PC-9 (cell line): ENCODE measurements at regions of chr6 and their contacts with region 1.

Region 1: DNA sequence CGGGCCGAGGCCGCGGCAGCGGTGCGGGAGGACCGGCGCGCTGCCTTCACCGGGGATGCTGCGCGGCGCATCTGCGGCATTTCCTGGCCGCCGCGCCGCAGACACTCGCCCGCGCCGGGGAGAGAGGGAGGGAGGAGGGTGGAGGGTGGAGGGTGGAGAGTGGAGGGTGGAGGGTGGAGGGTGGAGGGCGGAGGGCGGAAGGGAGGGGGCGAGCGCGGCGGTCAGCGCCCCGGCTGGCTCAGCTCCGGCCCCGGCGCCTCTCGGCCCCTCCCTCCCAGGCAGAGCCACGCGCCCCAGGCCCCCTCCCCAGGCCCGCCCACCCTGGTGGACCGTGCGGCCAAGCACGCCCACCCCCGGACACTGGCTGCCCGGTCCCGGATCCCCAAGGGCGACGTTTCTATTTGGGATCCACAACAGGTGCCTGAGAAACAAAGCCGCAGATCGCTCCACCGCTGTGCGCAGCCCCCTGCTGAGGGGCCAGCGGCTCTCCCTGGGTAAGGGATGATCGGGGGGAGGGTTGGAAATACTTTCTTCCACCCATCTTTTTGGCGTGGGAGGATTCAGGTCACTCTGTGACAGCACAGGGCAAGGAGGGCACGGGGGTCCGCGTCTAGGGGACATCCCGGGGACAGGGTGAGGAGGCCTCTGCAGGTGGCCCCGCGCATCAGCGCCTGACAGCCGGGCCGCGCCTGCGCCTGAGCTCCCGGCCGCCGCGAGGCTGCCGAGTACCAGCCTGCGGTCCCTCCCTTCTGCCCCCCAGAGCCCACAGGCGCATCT is 111.1 kb upstream of the BEND6 start:
- DNase-seq: peak; percentile 76 to 84
- H3K4me3 ChIP-seq: peak overlapping the region; percentile 80
- H3K27ac ChIP-seq: peak overlapping the region; percentile 49; the same call in 1 of the 2 replicates
- H3K4me1 ChIP-seq: peaks cover 41% of the 10 kb centered on the region
- H3K27me3 ChIP-seq: no peaks in the 10 kb centered on the region
- CTCF ChIP-seq: peak; percentile 68; the same call in 1 of the 2 replicates

Region 2: DNA sequence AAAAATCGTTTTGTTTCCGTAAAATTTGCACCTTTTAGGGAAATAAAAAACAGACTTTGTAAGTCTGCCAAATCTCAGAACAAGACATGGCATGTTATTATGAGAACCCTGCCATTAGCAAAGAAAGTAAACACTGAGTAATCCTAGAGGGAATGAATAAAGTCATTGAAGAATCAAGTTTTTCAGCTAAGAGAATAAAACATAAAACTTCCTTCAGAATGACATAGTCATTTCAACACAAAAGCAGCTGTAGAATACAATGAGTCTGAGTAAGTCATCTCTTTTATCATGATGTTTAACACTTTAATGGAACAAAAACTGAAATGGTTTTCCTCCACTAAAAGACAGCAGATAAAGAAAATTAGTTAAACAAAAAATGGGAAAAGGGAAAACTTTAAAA is 190.8 kb before region 1 on chr6:
- CTCF ChIA-PET with region 1: no interaction called
- POLR2A ChIA-PET with region 1: interaction called, 4 read pairs
- intact Hi-C with region 1: loop called (anchors 5 kb)
- DNase-seq: peak in 1 of 2 experiments; percentile 88
- H3K4me3 ChIP-seq: no peak overlapping the region
- H3K27ac ChIP-seq: peak overlapping the region; percentile 66
- H3K4me1 ChIP-seq: peaks cover 33% of the 10 kb centered on the region
- H3K27me3 ChIP-seq: no peaks in the 10 kb centered on the region
- CTCF ChIP-seq: no peak

Region 3: GRCh38 chr6:56693246-56693607 is 150.5 kb before region 1 on chr6:
- CTCF ChIA-PET with region 1: no interaction called
- POLR2A ChIA-PET with region 1: interaction called, 14 read pairs
- intact Hi-C with region 1: no loop called
- DNase-seq: peak in 1 of 2 experiments; percentile 69
- H3K4me3 ChIP-seq: no peak overlapping the region
- H3K27ac ChIP-seq: peak overlapping the region; percentile 53
- H3K4me1 ChIP-seq: peaks cover 37% of the 10 kb centered on the region
- H3K27me3 ChIP-seq: no peaks in the 10 kb centered on the region
- CTCF ChIP-seq: no peak

Region 4: GRCh38 chr6:56713254-56713672 is 130.5 kb before region 1 on chr6:
- CTCF ChIA-PET with region 1: interaction called, 4 read pairs
- POLR2A ChIA-PET with region 1: no interaction called
- intact Hi-C with region 1: loop called (anchors 1 kb)
- DNase-seq: peak; percentile 68 to 97
- H3K4me3 ChIP-seq: peak overlapping the region; percentile 37; the same call in 1 of the 2 replicates
- H3K27ac ChIP-seq: peak overlapping the region; percentile 85
- H3K4me1 ChIP-seq: peaks cover 67% of the 10 kb centered on the region
- H3K27me3 ChIP-seq: no peaks in the 10 kb centered on the region
- CTCF ChIP-seq: no peak

Region 5: DNA sequence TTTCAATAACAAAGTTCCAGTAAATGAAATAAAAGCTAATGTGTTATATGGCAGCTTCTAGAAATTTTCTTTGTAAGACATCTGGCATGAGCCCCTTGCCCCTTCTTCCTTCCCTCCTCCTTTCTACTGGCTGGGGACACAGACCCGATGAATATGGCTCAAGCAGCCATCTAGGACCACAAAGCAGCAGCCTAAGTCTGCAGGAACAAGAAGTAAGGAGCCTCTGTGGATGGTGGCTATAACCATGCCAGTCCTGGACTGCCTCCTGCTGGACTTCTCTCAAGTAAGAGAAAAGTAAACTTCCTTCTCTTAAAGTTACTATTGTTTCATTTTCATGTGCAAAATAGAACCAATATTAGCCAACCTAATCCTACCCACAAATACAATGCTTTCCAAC is 86.2 kb before region 1 on chr6:
- CTCF ChIA-PET with region 1: no interaction called
- POLR2A ChIA-PET with region 1: interaction called, 6 read pairs
- intact Hi-C with region 1: loop called (anchors 5 kb)
- DNase-seq: no peak
- H3K4me3 ChIP-seq: no peak overlapping the region
- H3K27ac ChIP-seq: 0 out of 2 replicates have a peak overlapping the region, but pooled peaks have one; percentile 14
- H3K4me1 ChIP-seq: peaks cover 24% of the 10 kb centered on the region
- H3K27me3 ChIP-seq: no peaks in the 10 kb centered on the region
- CTCF ChIP-seq: peak; percentile 42; the same call in 1 of the 2 replicates

Region 6: GRCh38 chr6:56796196-56796532 is 47.6 kb before region 1 on chr6:
- CTCF ChIA-PET with region 1: no interaction called
- POLR2A ChIA-PET with region 1: no interaction called
- intact Hi-C with region 1: no loop called
- DNase-seq: no peak
- H3K4me3 ChIP-seq: no peak overlapping the region
- H3K27ac ChIP-seq: peak overlapping the region; percentile 10; the same call in 1 of the 2 replicates
- H3K4me1 ChIP-seq: peaks cover 27% of the 10 kb centered on the region
- H3K27me3 ChIP-seq: no peaks in the 10 kb centered on the region
- CTCF ChIP-seq: no peak

Region 7: GRCh38 chr6:56808871-56809359 is 34.8 kb before region 1 on chr6:
- CTCF ChIA-PET with region 1: no interaction called
- POLR2A ChIA-PET with region 1: no interaction called
- intact Hi-C with region 1: loop called (anchors 2 kb)
- DNase-seq: peak; percentile 72 to 83
- H3K4me3 ChIP-seq: no peak overlapping the region
- H3K27ac ChIP-seq: peak overlapping the region; percentile 60
- H3K4me1 ChIP-seq: peaks cover 39% of the 10 kb centered on the region
- H3K27me3 ChIP-seq: no peaks in the 10 kb centered on the region
- CTCF ChIP-seq: no peak

Region 8: GRCh38 chr6:57038906-57039515 is 195.2 kb after region 1 on chr6:
- CTCF ChIA-PET with region 1: interaction called, 13 read pairs
- POLR2A ChIA-PET with region 1: no interaction called
- intact Hi-C with region 1: no loop called
- DNase-seq: no peak
- H3K4me3 ChIP-seq: no peak overlapping the region
- H3K27ac ChIP-seq: no peak overlapping the region
- H3K4me1 ChIP-seq: no peaks in the 10 kb centered on the region
- H3K27me3 ChIP-seq: no peaks in the 10 kb centered on the region
- CTCF ChIP-seq: no peak